ENCODE measurements at regions of chr6 and their contacts with region 1.

Region 1: DNA sequence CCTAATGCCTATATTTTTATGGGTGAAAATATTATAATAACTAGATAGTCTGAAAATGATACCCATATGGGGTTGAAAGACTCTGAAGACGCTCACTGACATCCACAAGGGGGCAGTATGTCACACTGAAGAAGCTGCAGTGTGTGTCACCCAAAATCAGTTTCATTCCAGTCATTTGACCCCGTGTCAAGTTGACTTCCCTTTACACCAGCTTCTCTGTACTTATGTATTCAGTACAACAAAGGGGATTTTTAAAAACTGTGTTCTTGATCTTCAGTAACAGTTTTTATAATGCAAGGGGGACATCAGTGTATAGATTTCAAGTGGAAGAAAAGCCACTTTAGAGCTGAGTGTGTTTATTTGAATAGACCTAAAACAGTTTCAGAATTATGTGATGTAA is 19.3 kb downstream of the FAXC start:
- DNase-seq: peak; percentile 80
- ATAC-seq: peak; percentile 98
- H3K4me3 Mint-ChIP-seq: no peak overlapping the region
- H3K27ac Mint-ChIP-seq: no peak overlapping the region
- H3K4me1 Mint-ChIP-seq: peaks cover 3% of the 10 kb centered on the region
- H3K27me3 Mint-ChIP-seq: peaks cover 4% of the 10 kb centered on the region

Region 2: DNA sequence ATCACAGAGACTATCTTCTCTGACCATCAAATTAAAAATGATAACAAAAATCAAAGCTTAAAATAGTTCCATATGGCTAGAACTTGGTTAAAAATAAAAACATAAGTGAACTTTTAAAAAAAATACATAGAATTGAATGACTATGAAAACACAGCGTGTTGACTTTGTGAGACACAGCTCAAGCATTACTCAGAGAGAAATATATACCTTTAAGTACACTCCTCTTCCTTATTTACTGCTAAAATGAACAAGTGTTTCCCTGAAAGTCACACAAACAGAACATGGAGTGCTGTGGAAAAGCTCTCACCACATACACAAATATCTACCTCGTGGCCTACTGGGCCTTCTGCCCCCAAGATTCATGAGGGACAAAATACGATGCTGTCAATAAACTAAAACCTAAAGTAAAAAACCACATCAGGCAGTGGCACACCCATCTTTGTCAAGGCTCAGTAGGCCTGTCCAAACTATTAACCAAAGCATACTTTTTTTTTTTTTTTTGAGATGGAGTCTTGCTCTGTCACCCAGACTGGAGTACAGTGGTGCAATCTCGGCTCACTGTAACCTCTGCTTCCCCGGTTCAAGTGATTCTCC is 11.8 kb after region 1 on chr6:
- CTCF ChIA-PET with region 1: interaction called, 11 read pairs
- POLR2A ChIA-PET with region 1: interaction called, 6 read pairs
- intact Hi-C with region 1: no loop called
- DNase-seq: no peak
- ATAC-seq: no peak
- H3K4me3 Mint-ChIP-seq: no peak overlapping the region
- H3K27ac Mint-ChIP-seq: no peak overlapping the region
- H3K4me1 Mint-ChIP-seq: peaks cover 3% of the 10 kb centered on the region
- H3K27me3 Mint-ChIP-seq: peaks cover 30% of the 10 kb centered on the region

Region 3: GRCh38 chr6:99349171-99350141 is 19.3 kb after region 1 on chr6 and contains the start of gene FAXC:
- CTCF ChIA-PET with region 1: interaction called, 10 read pairs
- POLR2A ChIA-PET with region 1: interaction called, 8 read pairs
- intact Hi-C with region 1: no loop called
- DNase-seq: peak; percentile 23
- ATAC-seq: peak; percentile 40
- H3K4me3 Mint-ChIP-seq: peak within 1 kb of the TSS; percentile 26
- H3K27ac Mint-ChIP-seq: no peak within 1 kb of the TSS
- H3K4me1 Mint-ChIP-seq: peaks cover 2% of the 10 kb centered on the region
- H3K27me3 Mint-ChIP-seq: peaks cover 53% of the 10 kb centered on the region
- total RNA-seq, gene FAXC: 0.16 TPM in 1 of 2 experiments, not detected in the other

Region 4: DNA sequence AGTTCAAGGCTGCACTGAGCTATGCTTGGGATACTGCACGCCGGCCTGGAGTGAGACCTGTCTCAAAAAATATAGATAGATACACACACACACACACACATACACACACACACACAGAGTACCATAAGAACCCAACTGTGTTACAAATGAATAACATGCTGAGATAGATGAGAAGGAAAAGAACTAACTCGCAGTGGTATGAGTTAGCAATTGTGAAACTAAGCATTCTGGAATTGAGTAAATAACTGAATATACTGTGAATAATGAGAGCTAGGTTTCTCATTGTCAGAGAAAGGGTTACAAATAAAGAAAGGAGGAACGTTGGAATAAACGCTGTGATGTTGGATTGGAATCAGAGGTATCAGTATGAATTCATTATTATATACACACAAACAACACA is 33.9 kb after region 1 on chr6:
- CTCF ChIA-PET with region 1: interaction called, 5 read pairs
- POLR2A ChIA-PET with region 1: no interaction called
- intact Hi-C with region 1: loop called in 1 of 2 experiments (anchors 2 kb)
- DNase-seq: peak; percentile 29
- ATAC-seq: peak; percentile 81
- H3K4me3 Mint-ChIP-seq: no peak overlapping the region
- H3K27ac Mint-ChIP-seq: no peak overlapping the region
- H3K4me1 Mint-ChIP-seq: peaks cover 16% of the 10 kb centered on the region
- H3K27me3 Mint-ChIP-seq: peaks cover 15% of the 10 kb centered on the region

Region 5: GRCh38 chr6:99393698-99394531 is 63.8 kb after region 1 on chr6 and contains the start of gene COQ3:
- CTCF ChIA-PET with region 1: interaction called, 19 read pairs
- POLR2A ChIA-PET with region 1: no interaction called
- intact Hi-C with region 1: loop called (anchors 1 to 5 kb)
- DNase-seq: peak; percentile 80
- ATAC-seq: peak; percentile 87
- H3K4me3 Mint-ChIP-seq: peak within 1 kb of the TSS; percentile 94
- H3K27ac Mint-ChIP-seq: peak within 1 kb of the TSS; percentile 84
- H3K4me1 Mint-ChIP-seq: peaks cover 14% of the 10 kb centered on the region
- H3K27me3 Mint-ChIP-seq: no peaks in the 10 kb centered on the region
- total RNA-seq, gene COQ3: 13.5 to 23.4 TPM

Region 6: GRCh38 chr6:99746261-99746895 is 416.2 kb after region 1 on chr6:
- CTCF ChIA-PET with region 1: interaction called, 3 read pairs
- POLR2A ChIA-PET with region 1: no interaction called
- intact Hi-C with region 1: loop called (anchors 5 kb)
- DNase-seq: peak; percentile 61
- ATAC-seq: peak; percentile 73
- H3K4me3 Mint-ChIP-seq: no peak overlapping the region
- H3K27ac Mint-ChIP-seq: no peak overlapping the region
- H3K4me1 Mint-ChIP-seq: no peaks in the 10 kb centered on the region
- H3K27me3 Mint-ChIP-seq: peaks cover 21% of the 10 kb centered on the region

Region 7: DNA sequence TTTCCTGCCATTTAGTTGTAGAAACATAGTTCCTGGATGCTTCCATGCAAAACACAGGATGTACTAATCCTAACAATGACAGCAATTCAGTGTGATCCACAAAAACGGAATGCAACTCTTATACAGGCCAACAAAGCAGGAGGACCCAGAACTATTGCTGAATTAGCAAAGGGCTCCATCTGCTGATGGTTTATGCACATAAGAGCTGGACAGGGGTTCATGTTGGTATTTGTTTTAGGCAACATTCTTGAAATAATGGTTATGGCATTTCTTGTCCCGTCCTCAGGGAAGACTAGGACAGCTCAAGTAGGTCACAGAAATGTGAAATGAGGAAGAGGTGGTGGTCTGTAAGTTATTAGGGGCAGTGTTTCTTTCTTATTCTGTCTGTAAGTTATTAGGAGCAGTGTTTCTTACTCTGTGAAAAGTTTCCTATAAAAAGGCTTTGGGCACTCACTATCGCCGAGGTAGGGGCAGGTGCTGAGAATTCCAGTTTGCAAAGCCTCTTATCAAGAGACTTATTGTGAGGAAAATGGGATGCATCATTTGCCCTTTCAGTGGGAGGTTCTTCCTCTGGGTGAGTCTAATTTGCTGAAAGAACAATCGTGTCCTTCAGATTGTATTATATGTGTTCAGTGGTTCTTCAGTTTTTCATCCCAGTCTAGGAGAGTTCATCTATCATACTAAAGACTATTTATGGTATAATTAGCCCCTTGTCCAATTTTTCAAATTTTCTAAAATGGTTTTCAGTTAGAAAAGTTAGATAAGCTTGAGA is 492.8 kb after region 1 on chr6:
- CTCF ChIA-PET with region 1: no interaction called
- POLR2A ChIA-PET with region 1: no interaction called
- intact Hi-C with region 1: loop called in 1 of 2 experiments (anchors 2 kb)
- DNase-seq: peak; percentile 7
- ATAC-seq: peak; percentile 49
- H3K4me3 Mint-ChIP-seq: peak overlapping the region; percentile 12
- H3K27ac Mint-ChIP-seq: no peak overlapping the region
- H3K4me1 Mint-ChIP-seq: peaks cover 7% of the 10 kb centered on the region
- H3K27me3 Mint-ChIP-seq: peaks cover 20% of the 10 kb centered on the region